ENCODE measurements at regions of chr4 and their contacts with region 1.

Region 1: DNA sequence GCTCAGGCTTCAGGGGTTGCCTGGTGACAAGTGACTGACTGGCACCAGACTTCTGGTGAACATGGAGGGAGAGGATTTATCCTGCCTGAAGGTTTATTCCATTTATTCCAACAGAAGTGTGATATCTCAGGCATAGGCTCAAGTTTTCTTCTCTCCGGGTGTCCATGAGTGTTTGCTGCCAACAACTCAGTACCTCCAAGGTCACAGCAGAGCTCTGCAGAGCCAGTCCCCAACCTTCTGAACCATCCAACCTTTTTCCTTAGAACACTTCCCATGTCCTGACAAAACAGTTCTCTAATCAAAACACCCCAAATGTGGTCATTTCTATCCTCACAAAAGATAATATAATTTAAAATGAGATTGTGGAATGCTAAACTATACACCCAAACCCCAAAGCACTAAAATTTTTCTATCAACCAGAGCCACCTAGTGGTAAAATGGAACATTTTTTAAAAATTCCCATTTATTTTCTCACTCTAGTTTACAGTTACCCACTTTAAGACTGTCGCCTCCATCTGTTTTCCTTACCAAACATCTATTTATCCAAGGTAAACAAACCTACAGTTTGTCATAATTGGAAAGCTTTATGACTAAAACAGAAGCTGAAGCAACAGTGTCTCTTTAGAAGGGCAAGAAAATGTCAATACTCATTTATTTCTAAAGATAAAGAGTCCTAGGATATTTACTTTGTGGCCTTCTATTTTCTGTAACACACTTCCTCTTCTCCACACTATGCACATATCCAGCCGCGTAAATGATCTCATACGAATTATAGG is 39.6 kb downstream of the TMEM154 start:
- DNase-seq: no peak
- H3K4me3 ChIP-seq: no peak overlapping the region
- H3K27ac ChIP-seq: no peak overlapping the region
- H3K4me1 ChIP-seq: no peaks in the 10 kb centered on the region
- H3K27me3 ChIP-seq: no peaks in the 10 kb centered on the region
- CTCF ChIP-seq: peak; percentile 54

Region 2: DNA sequence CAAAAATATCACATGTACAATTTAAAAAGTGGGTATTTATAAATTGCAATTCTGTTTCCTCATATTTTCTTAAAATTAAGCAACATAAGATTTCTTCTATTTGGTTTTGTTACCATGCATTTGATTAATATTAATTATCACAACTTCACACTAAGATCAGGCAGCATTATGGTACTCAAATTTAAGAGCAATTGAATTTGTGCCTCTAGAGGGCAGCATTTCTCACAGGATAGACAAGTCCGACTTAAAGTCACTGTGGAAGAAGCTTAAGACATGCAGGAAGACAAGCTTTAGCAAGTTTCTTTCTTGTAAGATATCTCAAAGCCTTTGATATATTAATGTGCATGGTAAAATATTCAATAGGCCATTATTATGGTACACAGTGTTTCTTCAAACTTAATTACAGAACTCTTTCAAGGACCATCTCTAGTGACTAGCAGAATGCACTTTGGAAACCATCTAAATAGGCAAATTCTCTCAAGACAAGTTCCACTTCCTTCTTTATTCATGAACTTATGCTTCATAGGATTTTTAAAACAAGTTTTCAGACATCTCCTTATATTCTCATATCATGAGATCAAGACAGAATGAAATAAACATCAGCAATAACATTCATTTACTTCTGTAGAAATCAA is 139.3 kb before region 1 on chr4:
- intact Hi-C with region 1: loop called (anchors 2 kb)
- DNase-seq: peak; percentile 81
- H3K4me3 ChIP-seq: no peak overlapping the region
- H3K27ac ChIP-seq: no peak overlapping the region
- H3K4me1 ChIP-seq: no peaks in the 10 kb centered on the region
- H3K27me3 ChIP-seq: no peaks in the 10 kb centered on the region
- CTCF ChIP-seq: peak; percentile 77